ENCODE measurements at regions of chr5 and their contacts with region 1.

Region 1: GRCh38 chr5:113224605-113225065 is 210.2 kb downstream of the TSSK1B start:
- DNase-seq: peak; percentile 96
- H3K4me3 ChIP-seq: no peak overlapping the region
- H3K27ac ChIP-seq: peak overlapping the region; percentile 56
- H3K4me1 ChIP-seq: peaks cover 43% of the 10 kb centered on the region
- H3K27me3 ChIP-seq: no peaks in the 10 kb centered on the region
- CTCF ChIP-seq: no peak
- POLR2A ChIP-seq: no peak

Region 2: DNA sequence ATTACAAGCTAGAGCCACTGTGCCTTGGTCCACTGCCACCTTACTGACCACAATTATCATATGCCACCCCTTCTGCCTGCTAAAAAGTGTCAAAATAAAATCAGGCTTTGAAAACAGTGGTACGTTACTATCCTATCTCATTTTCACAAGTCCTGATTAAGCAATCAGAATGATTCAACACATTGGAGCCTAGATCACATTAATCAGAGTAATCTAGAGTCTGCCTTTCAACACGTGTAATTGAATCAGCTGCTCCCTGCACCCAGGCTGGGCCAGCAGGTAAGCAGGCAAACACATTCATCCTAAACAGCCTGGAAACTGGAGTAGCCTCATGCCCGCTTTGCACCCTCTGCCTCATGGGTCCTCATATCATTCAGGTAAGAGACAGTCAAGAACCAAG is 61.9 kb before region 1 on chr5:
- CTCF ChIA-PET with region 1: interaction called, 3 read pairs
- POLR2A ChIA-PET with region 1: no interaction called
- dilution Hi-C with region 1: no loop called
- intact Hi-C with region 1: loop called (anchors 1 kb)
- DNase-seq: peak; percentile 45
- H3K4me3 ChIP-seq: no peak overlapping the region
- H3K27ac ChIP-seq: peak overlapping the region; percentile 10
- H3K4me1 ChIP-seq: peaks cover 32% of the 10 kb centered on the region
- H3K27me3 ChIP-seq: no peaks in the 10 kb centered on the region
- CTCF ChIP-seq: no peak
- POLR2A ChIP-seq: no peak

Region 3: DNA sequence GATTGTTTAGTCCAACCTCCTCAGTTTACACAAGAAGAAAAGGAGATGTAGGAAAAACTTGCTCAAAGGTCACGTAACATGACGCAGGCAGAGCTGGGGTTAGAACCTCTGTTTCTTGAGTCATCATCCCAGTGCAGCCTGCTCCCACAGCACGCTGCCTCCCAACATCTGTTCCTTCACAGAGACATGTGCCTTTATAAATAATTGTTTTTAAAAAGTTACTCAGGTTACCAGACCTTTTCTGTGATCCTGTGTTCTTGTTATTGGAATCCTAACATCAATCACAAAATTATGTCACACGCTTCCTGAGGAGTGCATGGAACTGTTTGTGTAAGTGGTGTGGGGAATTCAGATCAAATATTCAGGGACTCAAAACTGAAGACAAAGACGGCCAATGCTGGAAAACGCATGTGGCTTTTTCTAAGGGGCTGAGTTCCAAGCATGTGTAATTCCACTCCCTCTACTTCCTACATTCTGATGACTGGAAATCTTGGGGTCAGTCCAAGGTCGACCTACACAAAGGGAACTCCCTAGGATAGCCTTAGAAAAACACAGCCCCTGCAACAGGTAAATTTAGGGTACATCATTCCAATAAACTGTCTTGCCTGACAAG is 25.8 kb after region 1 on chr5:
- CTCF ChIA-PET with region 1: interaction called, 3 read pairs
- POLR2A ChIA-PET with region 1: no interaction called
- dilution Hi-C with region 1: no loop called
- intact Hi-C with region 1: loop called (anchors 1 kb)
- DNase-seq: peak; percentile 98
- H3K4me3 ChIP-seq: no peak overlapping the region
- H3K27ac ChIP-seq: peak overlapping the region; percentile 68
- H3K4me1 ChIP-seq: peaks cover 34% of the 10 kb centered on the region
- H3K27me3 ChIP-seq: no peaks in the 10 kb centered on the region
- CTCF ChIP-seq: no peak
- POLR2A ChIP-seq: no peak

Region 4: GRCh38 chr5:113271015-113271414 is 46.4 kb after region 1 on chr5:
- CTCF ChIA-PET with region 1: interaction called, 3 read pairs
- POLR2A ChIA-PET with region 1: no interaction called
- dilution Hi-C with region 1: no loop called
- intact Hi-C with region 1: loop called (anchors 2 kb)
- DNase-seq: peak; percentile 90
- H3K4me3 ChIP-seq: no peak overlapping the region
- H3K27ac ChIP-seq: peak overlapping the region; percentile 75
- H3K4me1 ChIP-seq: peaks cover 53% of the 10 kb centered on the region
- H3K27me3 ChIP-seq: no peaks in the 10 kb centered on the region
- CTCF ChIP-seq: no peak
- POLR2A ChIP-seq: no peak

Region 5: GRCh38 chr5:113371721-113372196 is 147.1 kb after region 1 on chr5:
- CTCF ChIA-PET with region 1: no interaction called
- POLR2A ChIA-PET with region 1: no interaction called
- dilution Hi-C with region 1: no loop called
- intact Hi-C with region 1: loop called (anchors 1 kb)
- DNase-seq: peak; percentile 95
- H3K4me3 ChIP-seq: no peak overlapping the region
- H3K27ac ChIP-seq: no peak overlapping the region
- H3K4me1 ChIP-seq: peaks cover 20% of the 10 kb centered on the region
- H3K27me3 ChIP-seq: no peaks in the 10 kb centered on the region
- CTCF ChIP-seq: no peak
- POLR2A ChIP-seq: no peak

Measured in endothelial cell of umbilical vein (primary cell).